Endothelial cell of umbilical vein (primary cell): ENCODE measurements at regions of chr1 and their contacts with region 1.

Region 1: GRCh38 chr1:222643938-222644635 is 26.2 kb downstream of the MIA3 start:
- DNase-seq: peak; percentile 99
- H3K4me3 ChIP-seq: peak overlapping the region; percentile 42 to 98 (median 72)
- H3K27ac ChIP-seq: peak overlapping the region; percentile 93
- H3K4me1 ChIP-seq: peaks cover 13% of the 10 kb centered on the region
- H3K27me3 ChIP-seq: no peaks in the 10 kb centered on the region
- CTCF ChIP-seq: no peak
- POLR2A ChIP-seq: peak; percentile 78

Region 2: GRCh38 chr1:221150996-221151395 is 1493.1 kb before region 1 on chr1:
- CTCF ChIA-PET with region 1: no interaction called
- POLR2A ChIA-PET with region 1: no interaction called
- dilution Hi-C with region 1: no loop called
- intact Hi-C with region 1: loop called (anchors 5 kb)
- DNase-seq: no peak
- H3K4me3 ChIP-seq: no peak overlapping the region
- H3K27ac ChIP-seq: no peak overlapping the region
- H3K4me1 ChIP-seq: no peaks in the 10 kb centered on the region
- H3K27me3 ChIP-seq: no peaks in the 10 kb centered on the region
- CTCF ChIP-seq: no peak
- POLR2A ChIP-seq: no peak

Region 3: GRCh38 chr1:222617367-222617951 is 26.6 kb before region 1 on chr1:
- CTCF ChIA-PET with region 1: interaction called, 3 read pairs
- POLR2A ChIA-PET with region 1: no interaction called
- dilution Hi-C with region 1: no loop called
- intact Hi-C with region 1: loop called (anchors 1 kb)
- DNase-seq: peak; percentile 85
- H3K4me3 ChIP-seq: peak overlapping the region; percentile 19 to 55 (median 31)
- H3K27ac ChIP-seq: peak overlapping the region; percentile 18
- H3K4me1 ChIP-seq: peaks cover 7% of the 10 kb centered on the region
- H3K27me3 ChIP-seq: peaks cover 8 to 29% of the 10 kb centered on the region in 2 experiments
- CTCF ChIP-seq: no peak
- POLR2A ChIP-seq: peak; percentile 63

Region 4: GRCh38 chr1:222665964-222666363 is 21.9 kb after region 1 on chr1:
- CTCF ChIA-PET with region 1: no interaction called
- POLR2A ChIA-PET with region 1: no interaction called
- dilution Hi-C with region 1: no loop called
- intact Hi-C with region 1: no loop called
- DNase-seq: no peak
- H3K4me3 ChIP-seq: no peak overlapping the region
- H3K27ac ChIP-seq: no peak overlapping the region
- H3K4me1 ChIP-seq: no peaks in the 10 kb centered on the region
- H3K27me3 ChIP-seq: no peaks in the 10 kb centered on the region
- CTCF ChIP-seq: no peak
- POLR2A ChIP-seq: no peak

Region 5: DNA sequence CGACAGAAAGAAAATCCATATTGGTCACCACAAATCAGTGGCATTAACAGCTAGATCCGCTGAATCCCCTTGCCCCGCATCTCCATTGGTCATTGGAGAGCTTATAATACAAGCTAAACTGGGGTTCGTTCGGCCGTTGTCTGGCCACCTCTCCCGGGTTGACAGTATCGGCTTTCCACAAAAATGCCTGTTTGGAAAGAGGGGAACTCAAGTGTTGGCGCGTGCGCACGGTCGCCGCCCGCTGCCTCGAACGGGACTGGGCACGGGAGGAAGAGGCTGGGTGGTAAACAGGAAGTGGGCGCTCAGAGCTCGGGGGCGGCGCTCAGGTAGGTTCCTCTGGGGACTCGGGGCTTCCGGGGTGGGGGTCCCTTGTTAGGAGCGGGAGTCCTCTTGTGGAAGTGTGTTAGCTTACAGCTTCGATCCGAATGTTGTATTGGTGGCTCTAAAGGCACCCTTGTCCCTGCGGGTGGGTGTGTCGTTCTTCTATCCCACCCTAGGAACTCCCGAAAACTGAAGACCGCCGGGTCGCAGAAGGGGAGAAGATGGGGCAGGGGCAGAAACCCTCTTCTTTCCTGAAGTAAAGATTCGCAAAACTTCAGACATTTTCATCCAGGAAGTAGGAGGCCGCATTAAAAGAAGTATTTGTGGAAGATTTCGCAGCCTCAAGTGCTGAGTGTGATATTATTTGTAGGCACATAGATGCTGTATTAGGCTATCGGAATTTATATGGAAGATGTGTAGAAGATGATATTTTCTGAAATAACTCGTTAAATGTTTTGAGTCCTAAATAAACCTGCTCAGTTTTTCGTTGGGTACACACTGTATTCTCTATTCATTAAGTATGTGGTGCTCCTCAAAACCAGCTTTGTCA is 69.2 kb after region 1 on chr1:
- CTCF ChIA-PET with region 1: interaction called, 3 read pairs
- POLR2A ChIA-PET with region 1: no interaction called
- dilution Hi-C with region 1: no loop called
- intact Hi-C with region 1: loop called (anchors 1 kb)
- DNase-seq: peak; percentile 97
- H3K4me3 ChIP-seq: peak overlapping the region; percentile 54 to 98 (median 92)
- H3K27ac ChIP-seq: peak overlapping the region; percentile 90
- H3K4me1 ChIP-seq: peaks cover 14% of the 10 kb centered on the region
- H3K27me3 ChIP-seq: no peaks in the 10 kb centered on the region
- CTCF ChIP-seq: no peak
- POLR2A ChIP-seq: no peak